ENCODE measurements at regions of chr3 and their contacts with region 1.

Region 1: GRCh38 chr3:70811880-70812279 is 499.4 kb upstream of the MDFIC2 start:
- DNase-seq: peak; percentile 52
- H3K4me3 ChIP-seq: no peak overlapping the region
- H3K27ac ChIP-seq: no peak overlapping the region
- H3K27me3 ChIP-seq: no peaks in the 10 kb centered on the region
- CTCF ChIP-seq: no peak

Region 2: GRCh38 chr3:69941808-69942176 is 870.1 kb before region 1 on chr3:
- CTCF ChIA-PET with region 1: no interaction called
- POLR2A ChIA-PET with region 1: no interaction called
- DNase-seq: peak; percentile 59
- H3K4me3 ChIP-seq: no peak overlapping the region
- H3K27ac ChIP-seq: no peak overlapping the region
- H3K27me3 ChIP-seq: no peaks in the 10 kb centered on the region
- CTCF ChIP-seq: no peak

Region 3: GRCh38 chr3:70614111-70614510 is 197.8 kb before region 1 on chr3:
- CTCF ChIA-PET with region 1: no interaction called
- POLR2A ChIA-PET with region 1: no interaction called
- DNase-seq: no peak
- H3K4me3 ChIP-seq: no peak overlapping the region
- H3K27ac ChIP-seq: no peak overlapping the region
- H3K27me3 ChIP-seq: peaks cover 2% of the 10 kb centered on the region
- CTCF ChIP-seq: no peak

Region 4: DNA sequence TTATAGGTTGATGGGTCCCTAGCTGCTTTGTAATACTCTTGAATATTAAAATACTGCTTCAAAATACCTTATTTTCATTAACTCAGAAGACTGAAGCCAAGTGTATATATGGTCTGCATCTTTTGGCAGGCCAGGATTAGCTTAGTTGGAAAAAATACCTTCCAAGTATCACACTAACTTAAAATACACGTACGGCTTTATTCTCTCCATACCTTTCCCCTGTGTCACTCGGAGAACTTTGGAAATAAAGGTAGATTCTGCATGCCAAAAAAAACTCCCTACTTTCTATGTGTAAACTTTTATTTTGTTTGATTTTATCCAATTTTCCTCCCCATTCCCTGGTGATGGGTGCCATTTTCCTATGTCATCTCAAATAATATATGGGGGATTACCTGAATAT is 77.1 kb before region 1 on chr3:
- CTCF ChIA-PET with region 1: interaction called, 3 read pairs
- POLR2A ChIA-PET with region 1: interaction called, 11 read pairs
- DNase-seq: no peak
- H3K4me3 ChIP-seq: no peak overlapping the region
- H3K27ac ChIP-seq: no peak overlapping the region
- H3K27me3 ChIP-seq: no peaks in the 10 kb centered on the region
- CTCF ChIP-seq: no peak

Region 5: DNA sequence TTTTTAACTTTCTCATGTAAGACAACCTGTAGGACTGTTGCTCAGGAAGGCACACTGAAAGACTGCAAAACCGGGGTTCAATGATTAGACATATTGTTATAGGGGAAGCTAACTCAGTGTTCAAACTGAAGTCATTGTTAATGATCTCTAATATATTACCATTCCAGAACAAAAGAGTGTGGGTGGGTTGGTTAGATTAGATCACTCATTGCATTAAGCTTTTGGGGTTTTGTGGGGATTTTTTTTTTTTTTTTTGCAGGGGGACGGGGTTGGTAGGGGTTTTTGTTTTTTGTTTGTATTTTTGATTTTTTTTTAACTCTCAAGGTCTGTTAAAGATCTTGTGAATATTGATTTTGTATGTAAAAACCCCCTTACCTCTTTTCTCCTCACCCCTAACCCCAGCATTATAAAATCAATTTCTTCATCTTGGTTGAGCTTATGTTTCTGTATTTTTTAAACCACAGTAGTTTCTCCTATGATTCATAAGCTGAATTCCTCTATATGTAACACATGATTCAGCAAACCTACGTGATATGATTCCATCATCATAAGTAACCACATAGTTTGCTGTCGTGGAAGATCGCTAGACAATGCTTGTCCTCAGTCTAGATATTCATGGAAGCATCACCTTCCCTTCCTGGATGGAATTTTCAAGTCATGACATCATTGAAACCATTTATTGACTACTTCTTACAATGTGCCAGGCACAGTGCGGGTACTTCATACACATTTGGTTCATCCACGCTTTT is 44.7 kb after region 1 on chr3:
- CTCF ChIA-PET with region 1: interaction called, 11 read pairs
- POLR2A ChIA-PET with region 1: no interaction called
- DNase-seq: peak; percentile 64
- H3K4me3 ChIP-seq: no peak overlapping the region
- H3K27ac ChIP-seq: peak overlapping the region; percentile 71
- H3K27me3 ChIP-seq: no peaks in the 10 kb centered on the region
- CTCF ChIP-seq: no peak

Region 6: GRCh38 chr3:71258526-71258925 is 446.6 kb after region 1 on chr3:
- CTCF ChIA-PET with region 1: interaction called, 14 read pairs
- POLR2A ChIA-PET with region 1: no interaction called
- DNase-seq: no peak
- H3K4me3 ChIP-seq: no peak overlapping the region
- H3K27ac ChIP-seq: peak overlapping the region; percentile 49
- H3K27me3 ChIP-seq: no peaks in the 10 kb centered on the region
- CTCF ChIP-seq: no peak

Measured in AG04450 (cell line).